ENCODE measurements at regions of chrX and their contacts with region 1.

Region 1: GRCh38 chrX:4935846-4936245 is 1222.4 kb upstream of the PRKX start:
- DNase-seq: no peak
- ATAC-seq: peak; percentile 76
- H3K4me3 Mint-ChIP-seq: peak overlapping the region; percentile 32
- H3K27ac Mint-ChIP-seq: peak overlapping the region; percentile 77
- H3K4me1 Mint-ChIP-seq: peaks cover 25% of the 10 kb centered on the region
- H3K27me3 Mint-ChIP-seq: no peaks in the 10 kb centered on the region
- CTCF ChIP-seq: no peak

Region 2: DNA sequence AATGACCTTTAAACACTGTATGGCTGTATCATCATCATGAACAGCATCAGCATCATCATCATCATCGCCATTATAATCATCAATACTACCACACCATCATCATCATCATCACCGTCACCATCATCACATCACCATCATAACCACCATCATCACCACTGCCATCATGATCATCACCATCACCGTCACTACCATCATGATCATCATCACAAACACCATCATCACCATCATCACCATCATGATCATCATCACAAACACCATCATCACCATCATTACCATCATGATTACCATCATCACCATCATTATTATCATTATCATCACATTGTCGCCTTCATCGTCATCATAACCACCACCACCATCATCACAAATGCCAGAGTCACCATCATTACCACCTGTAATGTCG is 95.9 kb after region 1 on chrX:
- CTCF ChIA-PET with region 1: no interaction called
- POLR2A ChIA-PET with region 1: no interaction called
- intact Hi-C with region 1: loop called (anchors 5 kb)
- DNase-seq: no peak
- ATAC-seq: no peak
- H3K4me3 Mint-ChIP-seq: no peak overlapping the region
- H3K27ac Mint-ChIP-seq: no peak overlapping the region
- H3K4me1 Mint-ChIP-seq: no peaks in the 10 kb centered on the region
- H3K27me3 Mint-ChIP-seq: no peaks in the 10 kb centered on the region
- CTCF ChIP-seq: no peak

Measured in activated B cell treated with CpG ODN at 0.5 μM for 24 hours (primary cell).